A549 (cell line): ENCODE measurements at regions of chr12 and their contacts with region 1.

Region 1: GRCh38 chr12:132285991-132286681 is 43.3 kb downstream of the GALNT9 start:
- DNase-seq: peak in 1 of 2 experiments; percentile 56
- ATAC-seq: peak in 1 of 2 experiments; percentile 57; a peak in 3 of 6 replicates
- H3K4me3 ChIP-seq: no peak overlapping the region
- H3K27ac ChIP-seq: peak overlapping the region; percentile 30 to 80; a peak in 4 of 6 replicates
- H3K4me1 ChIP-seq: peaks cover 39% of the 10 kb centered on the region
- CTCF ChIP-seq: no peak
- EP300 ChIP-seq: no peak
- POLR2A ChIP-seq: no peak
- RAD21 ChIP-seq: no peak

Region 2: GRCh38 chr12:132275110-132275531 is 11.0 kb before region 1 on chr12:
- CTCF ChIA-PET with region 1: interaction called, 14 read pairs
- POLR2A ChIA-PET with region 1: no interaction called
- DNase-seq: peak; percentile 83 to 92
- ATAC-seq: peak; percentile 93 to 98
- H3K4me3 ChIP-seq: no peak overlapping the region
- H3K27ac ChIP-seq: peak overlapping the region in 1 of 2 experiments; percentile 54; a peak in 3 of 6 replicates
- H3K4me1 ChIP-seq: 0 out of 3 replicates have a peak, but pooled peaks cover 3% of the 10 kb centered on the region
- CTCF ChIP-seq: no peak
- EP300 ChIP-seq: no peak
- POLR2A ChIP-seq: no peak
- RAD21 ChIP-seq: no peak

Region 3: DNA sequence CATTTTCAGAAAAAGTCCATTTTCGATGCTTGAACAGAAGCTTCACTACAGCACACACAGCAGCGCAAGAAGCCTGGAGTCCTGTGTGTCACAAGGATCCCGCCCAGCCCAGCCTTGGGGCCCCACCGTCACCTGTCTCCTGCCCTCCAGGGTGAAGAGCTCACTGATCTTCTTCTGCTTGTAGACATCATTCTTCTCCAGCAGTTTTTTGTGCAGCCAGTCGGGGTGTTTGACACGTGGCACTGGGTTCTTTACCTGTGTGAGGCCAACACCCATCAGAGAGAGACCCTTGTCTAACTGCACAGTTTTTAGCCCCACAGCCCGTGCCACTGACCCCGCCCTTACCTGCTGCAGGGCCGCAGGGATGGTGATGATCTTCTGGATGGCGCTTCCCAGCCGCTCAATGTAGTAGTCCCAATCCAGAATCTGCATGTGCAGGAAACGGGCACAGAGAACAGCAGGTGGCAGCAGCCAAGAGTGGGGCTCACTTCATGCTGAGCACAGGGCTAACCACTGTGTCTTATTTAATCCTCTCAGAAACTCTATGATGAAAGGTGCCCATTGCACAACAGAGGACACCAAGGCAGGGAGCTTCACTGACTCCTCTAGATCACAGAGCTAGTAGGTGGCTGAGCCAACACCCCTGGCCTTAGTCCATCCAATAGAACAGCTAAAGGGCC is 371.0 kb after region 1 on chr12:
- CTCF ChIA-PET with region 1: no interaction called
- POLR2A ChIA-PET with region 1: no interaction called
- DNase-seq: no peak
- ATAC-seq: peak in 1 of 2 experiments; percentile 51; a peak in 3 of 6 replicates
- H3K4me3 ChIP-seq: no peak overlapping the region
- H3K27ac ChIP-seq: no peak overlapping the region
- H3K4me1 ChIP-seq: no peaks in the 10 kb centered on the region
- CTCF ChIP-seq: no peak
- EP300 ChIP-seq: no peak
- POLR2A ChIP-seq: no peak
- RAD21 ChIP-seq: no peak